Common myeloid progenitor, CD34-positive (primary cell): ENCODE measurements at regions of chr6 and their contacts with region 1.

Region 1: DNA sequence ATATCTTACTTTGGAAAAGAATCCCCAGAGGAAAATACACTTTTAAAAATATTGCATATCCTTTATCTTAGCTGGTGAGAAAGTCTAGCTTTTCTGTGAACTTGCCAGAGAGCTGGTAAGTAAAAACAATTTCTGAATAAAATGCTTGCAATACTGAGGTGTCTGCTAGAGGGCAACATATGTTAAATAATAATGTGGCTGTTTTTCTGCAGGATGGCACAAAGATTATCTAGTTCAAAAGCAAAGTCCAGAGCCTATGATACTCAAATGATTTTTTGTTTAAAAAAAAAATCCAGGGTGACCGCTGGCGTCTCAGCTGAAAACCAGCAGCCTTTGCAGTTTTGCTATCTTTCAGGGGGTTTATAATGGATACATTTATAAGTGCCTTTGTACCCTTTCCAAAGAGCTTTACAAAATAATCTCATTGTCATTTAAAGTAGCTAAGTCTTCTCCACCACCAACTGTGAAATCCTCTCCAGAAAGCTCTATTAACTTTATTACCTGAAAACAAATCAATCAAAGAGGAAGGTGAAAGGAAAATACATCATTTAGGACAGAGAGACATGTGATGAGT is 194.9 kb downstream of the PHACTR1 start:
- DNase-seq: peak; percentile 51 to 74 (median 70)
- H3K4me3 ChIP-seq: no peak overlapping the region
- H3K27ac ChIP-seq: no peak overlapping the region
- H3K4me1 ChIP-seq: peaks cover 3 to 28% (median 7%) of the 10 kb centered on the region in 4 experiments
- H3K27me3 ChIP-seq: no peaks in the 10 kb centered on the region

Region 2: GRCh38 chr6:13113981-13114593 is 202.6 kb after region 1 on chr6:
- CTCF ChIA-PET with region 1: interaction called, 94 read pairs
- POLR2A ChIA-PET with region 1: no interaction called
- DNase-seq: peak in 1 of 3 donors; percentile 26
- H3K4me3 ChIP-seq: peak overlapping the region in 1 of 7 experiments; percentile 54
- H3K27ac ChIP-seq: peak overlapping the region in 1 of 2 experiments; percentile 4
- H3K4me1 ChIP-seq: peaks cover 1 to 31% (median 22%) of the 10 kb centered on the region in 4 experiments
- H3K27me3 ChIP-seq: no peaks in the 10 kb centered on the region

Region 3: DNA sequence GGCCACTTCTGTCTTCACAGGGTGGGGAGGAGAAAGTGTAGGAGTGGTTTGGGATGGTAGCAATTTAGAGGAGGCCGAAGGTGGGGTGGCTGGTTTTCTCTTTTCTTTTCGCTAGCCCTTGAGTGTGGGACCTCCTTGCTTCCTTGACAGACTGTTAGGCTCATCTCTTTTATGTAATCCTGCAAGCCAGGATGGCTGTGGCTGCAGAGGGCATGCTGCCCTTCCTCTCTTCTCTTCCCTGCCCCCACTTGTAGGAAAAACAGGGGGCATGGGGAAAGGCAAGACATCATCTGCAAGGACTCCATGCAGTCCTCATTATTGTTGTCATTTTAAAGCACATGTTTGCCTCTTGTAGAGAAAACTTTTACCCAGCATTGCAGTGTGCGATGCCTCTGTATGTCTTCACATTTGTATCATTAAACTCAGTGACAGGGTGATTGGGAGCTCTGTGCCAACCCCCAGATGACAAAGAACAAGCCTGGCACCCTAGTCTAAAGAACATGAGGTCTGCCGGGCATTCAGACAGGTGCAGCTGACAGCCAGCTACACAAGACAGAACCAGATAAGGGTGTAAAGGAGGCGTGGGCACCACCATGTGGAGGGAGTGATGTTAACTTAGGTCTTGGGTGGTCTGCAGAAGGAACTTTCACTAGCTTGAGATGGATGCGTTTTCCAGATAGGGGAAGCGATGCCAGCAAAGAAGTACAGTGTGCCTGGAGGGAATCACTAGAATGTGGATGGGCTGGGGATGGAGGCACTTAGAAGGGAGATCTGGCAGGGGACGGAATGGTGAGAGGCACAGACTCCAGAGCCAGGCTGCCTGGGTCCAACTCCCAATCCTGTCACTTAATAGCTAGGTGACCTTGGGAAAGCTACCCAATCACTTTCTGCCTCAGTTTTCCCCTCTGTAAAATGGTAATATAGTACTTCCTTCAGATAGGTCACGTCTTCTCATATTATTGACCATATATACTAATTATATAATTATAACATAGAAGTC is 209.3 kb after region 1 on chr6:
- CTCF ChIA-PET with region 1: interaction called, 94 read pairs
- POLR2A ChIA-PET with region 1: no interaction called
- DNase-seq: peak; percentile 68 to 86 (median 83)
- H3K4me3 ChIP-seq: no peak overlapping the region
- H3K27ac ChIP-seq: no peak overlapping the region
- H3K4me1 ChIP-seq: peaks cover 0 to 33% (median 23%) of the 10 kb centered on the region in 4 experiments
- H3K27me3 ChIP-seq: no peaks in the 10 kb centered on the region

Region 4: GRCh38 chr6:13273931-13274706 is 362.6 kb after region 1 on chr6:
- CTCF ChIA-PET with region 1: interaction called, 14 read pairs
- POLR2A ChIA-PET with region 1: interaction called, 3 read pairs
- DNase-seq: peak; percentile 85 to 96 (median 94)
- H3K4me3 ChIP-seq: peak overlapping the region in 6 of 7 experiments; percentile 71 to 94 (median 80)
- H3K27ac ChIP-seq: peak overlapping the region; percentile 92 to 95
- H3K4me1 ChIP-seq: peaks cover 16 to 75% (median 57%) of the 10 kb centered on the region in 4 experiments
- H3K27me3 ChIP-seq: no peaks in the 10 kb centered on the region